HepG2 (cell line): ENCODE measurements at regions of chr10 and their contacts with region 1.

Region 1: GRCh38 chr10:78450807-78451485 is 417.3 kb downstream of the RPS24 start:
- DNase-seq: no peak
- ATAC-seq: no peak
- H3K4me3 ChIP-seq: no peak overlapping the region
- H3K27ac ChIP-seq: no peak overlapping the region
- H3K4me1 ChIP-seq: peaks cover 28% of the 10 kb centered on the region
- H3K27me3 ChIP-seq: no peaks in the 10 kb centered on the region
- CTCF ChIP-seq: no peak
- EP300 ChIP-seq: no peak
- POLR2A ChIP-seq: no peak
- RAD21 ChIP-seq: no peak

Region 2: DNA sequence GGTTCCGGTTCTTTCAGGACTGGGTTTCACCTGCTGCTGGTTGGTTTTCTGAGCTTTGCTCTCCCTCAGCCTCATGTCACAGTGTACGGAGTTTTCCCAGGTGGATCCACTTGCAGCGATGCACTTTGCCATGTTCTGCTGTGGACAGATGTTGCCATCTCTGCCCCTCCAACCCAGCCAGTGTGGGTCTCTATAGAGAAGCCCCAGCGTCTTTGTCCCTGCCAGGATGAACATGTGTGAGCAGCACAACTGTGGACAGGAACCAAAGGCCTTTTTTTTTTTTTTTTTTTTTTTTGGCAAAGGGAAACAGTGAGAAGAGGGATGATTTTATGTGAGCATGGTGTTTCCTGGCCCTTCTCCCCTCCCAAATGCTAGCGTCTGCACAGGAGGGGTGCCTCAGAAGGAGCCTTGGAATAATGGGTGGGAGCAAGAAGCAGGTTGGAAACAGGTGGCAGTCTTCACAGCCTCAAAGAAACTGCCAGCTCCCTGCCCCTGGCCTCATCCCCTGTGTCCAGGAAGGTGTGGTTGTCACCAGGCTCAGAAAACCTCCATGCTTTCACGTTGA is 310.8 kb before region 1 on chr10:
- CTCF ChIA-PET with region 1: no interaction called
- POLR2A ChIA-PET with region 1: no interaction called
- in situ Hi-C with region 1: no loop called
- intact Hi-C with region 1: loop called (anchors 5 kb)
- DNase-seq: no peak
- ATAC-seq: no peak
- H3K4me3 ChIP-seq: no peak overlapping the region
- H3K27ac ChIP-seq: no peak overlapping the region
- H3K4me1 ChIP-seq: peaks cover 7% of the 10 kb centered on the region; the same call in 1 of the 2 replicates
- H3K27me3 ChIP-seq: no peaks in the 10 kb centered on the region
- CTCF ChIP-seq: no peak
- EP300 ChIP-seq: no peak
- POLR2A ChIP-seq: no peak
- RAD21 ChIP-seq: no peak